ENCODE measurements at regions of chr7 and their contacts with region 1.

Region 1: GRCh38 chr7:152967958-152968357 is 208.4 kb downstream of the ACTR3B start:
- DNase-seq: no peak
- ATAC-seq: no peak
- H3K4me3 ChIP-seq: no peak overlapping the region
- H3K27ac ChIP-seq: no peak overlapping the region
- H3K4me1 ChIP-seq: no peaks in the 10 kb centered on the region
- H3K27me3 ChIP-seq: no peaks in the 10 kb centered on the region
- CTCF ChIP-seq: no peak
- POLR2A ChIP-seq: no peak

Region 2: GRCh38 chr7:152933904-152934303 is 34.1 kb before region 1 on chr7:
- intact Hi-C with region 1: no loop called
- DNase-seq: no peak
- ATAC-seq: no peak
- H3K4me3 ChIP-seq: no peak overlapping the region
- H3K27ac ChIP-seq: no peak overlapping the region
- H3K4me1 ChIP-seq: no peaks in the 10 kb centered on the region
- H3K27me3 ChIP-seq: no peaks in the 10 kb centered on the region
- CTCF ChIP-seq: no peak
- POLR2A ChIP-seq: no peak

Region 3: DNA sequence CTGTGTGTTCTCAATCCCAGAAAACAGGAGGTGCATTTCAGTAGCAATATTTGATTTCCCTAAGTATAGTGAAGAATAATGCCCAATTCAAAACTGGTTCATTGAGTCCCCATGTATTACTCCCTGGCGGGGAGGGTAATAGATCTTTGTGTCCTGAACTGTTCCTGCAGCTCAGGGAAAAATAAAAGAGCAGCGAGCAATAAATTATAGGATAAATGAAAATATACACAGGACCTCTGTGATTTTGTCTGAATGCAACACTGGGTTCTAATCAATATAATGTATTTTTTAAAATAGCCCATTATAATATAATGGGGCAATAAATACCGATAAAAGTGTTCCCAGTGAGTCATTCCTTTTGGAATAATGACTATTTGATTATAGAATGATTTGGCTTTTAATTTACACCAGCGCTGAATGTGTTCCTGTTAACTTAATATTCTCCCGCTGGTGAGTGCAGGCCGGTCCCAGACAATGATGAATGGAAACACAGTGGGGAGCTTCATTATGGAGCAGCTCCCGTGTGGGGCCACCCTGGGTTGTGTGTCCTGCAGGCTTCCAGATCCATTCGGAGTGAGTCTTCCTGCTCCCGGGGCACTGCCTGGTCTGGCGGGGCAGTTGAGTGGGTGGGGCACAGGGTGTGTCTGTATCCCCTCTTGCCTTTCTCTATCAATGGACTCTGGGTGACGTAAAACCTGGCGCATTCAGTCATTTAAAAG is 54.7 kb after region 1 on chr7:
- intact Hi-C with region 1: loop called in 1 of 10 experiments (anchors 10 kb)
- DNase-seq: no peak
- ATAC-seq: no peak
- H3K4me3 ChIP-seq: no peak overlapping the region
- H3K27ac ChIP-seq: no peak overlapping the region
- H3K4me1 ChIP-seq: no peaks in the 10 kb centered on the region
- H3K27me3 ChIP-seq: no peaks in the 10 kb centered on the region
- CTCF ChIP-seq: no peak
- POLR2A ChIP-seq: no peak

Measured in heart left ventricle (tissue), 16 donors.